ENCODE measurements at regions of chr10 and their contacts with region 1.

Region 1: DNA sequence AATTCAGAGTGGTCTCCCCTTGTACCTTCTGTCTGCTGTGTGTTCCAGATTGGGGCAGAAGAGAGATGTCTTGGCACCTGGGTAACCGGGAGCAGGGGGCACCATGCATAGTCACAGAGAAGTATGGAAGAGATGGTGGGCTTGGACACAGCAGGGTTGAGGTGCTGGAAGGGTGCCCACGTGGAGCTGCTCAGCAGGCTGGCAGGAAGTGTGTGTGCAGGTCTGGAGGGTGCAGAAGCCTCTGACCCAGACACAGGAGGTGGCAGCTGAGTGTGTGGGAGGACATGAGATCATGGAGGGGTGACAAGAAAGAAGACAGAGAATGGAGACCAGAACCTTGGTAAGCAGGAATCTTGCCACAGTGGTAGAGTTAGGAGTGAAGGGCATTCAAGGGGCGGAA is 42.3 kb upstream of the DUSP5 start:
- DNase-seq: peak; percentile 77
- ATAC-seq: peak; percentile 83
- H3K4me3 Mint-ChIP-seq: no peak overlapping the region
- H3K27ac Mint-ChIP-seq: peak overlapping the region; percentile 39
- H3K4me1 Mint-ChIP-seq: peaks cover 33% of the 10 kb centered on the region
- H3K27me3 Mint-ChIP-seq: no peaks in the 10 kb centered on the region
- CTCF ChIP-seq: no peak

Region 2: DNA sequence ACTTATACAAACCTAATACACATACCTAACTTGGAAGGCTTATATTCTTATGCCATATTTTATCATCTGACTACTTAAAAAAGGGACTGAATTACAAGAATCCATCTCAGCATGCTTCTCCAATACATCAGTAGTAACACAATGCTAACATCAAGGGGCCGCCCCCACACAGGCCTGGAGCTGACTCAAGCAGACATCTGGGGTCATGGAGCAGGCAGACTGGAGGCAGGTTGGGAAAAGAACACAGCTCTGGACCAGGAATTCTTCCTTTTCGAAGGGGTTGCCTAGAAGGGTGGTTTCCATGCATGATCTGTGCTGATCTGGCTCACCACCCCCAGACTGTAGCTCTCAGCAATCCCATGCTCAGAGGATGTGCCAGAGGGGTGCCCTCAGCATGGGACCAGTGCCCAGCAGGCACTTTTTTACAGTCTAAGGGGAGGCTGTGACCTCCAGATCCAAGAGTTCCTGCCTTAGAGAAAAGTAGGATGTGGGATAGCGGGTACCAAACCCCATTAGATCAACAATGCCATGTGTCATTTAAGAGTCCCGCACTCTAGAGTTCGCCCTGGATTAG is 16.2 kb after region 1 on chr10:
- CTCF ChIA-PET with region 1: no interaction called
- POLR2A ChIA-PET with region 1: no interaction called
- intact Hi-C with region 1: loop called (anchors 2 kb)
- DNase-seq: no peak
- ATAC-seq: no peak
- H3K4me3 Mint-ChIP-seq: no peak overlapping the region
- H3K27ac Mint-ChIP-seq: no peak overlapping the region
- H3K4me1 Mint-ChIP-seq: no peaks in the 10 kb centered on the region
- H3K27me3 Mint-ChIP-seq: no peaks in the 10 kb centered on the region
- CTCF ChIP-seq: no peak

Measured in activated CD8-positive, alpha-beta T cell treated with anti-CD3 and anti-CD28 coated beads for 36 hours (primary cell).